ENCODE measurements at regions of chr3 and their contacts with region 1.

Region 1: DNA sequence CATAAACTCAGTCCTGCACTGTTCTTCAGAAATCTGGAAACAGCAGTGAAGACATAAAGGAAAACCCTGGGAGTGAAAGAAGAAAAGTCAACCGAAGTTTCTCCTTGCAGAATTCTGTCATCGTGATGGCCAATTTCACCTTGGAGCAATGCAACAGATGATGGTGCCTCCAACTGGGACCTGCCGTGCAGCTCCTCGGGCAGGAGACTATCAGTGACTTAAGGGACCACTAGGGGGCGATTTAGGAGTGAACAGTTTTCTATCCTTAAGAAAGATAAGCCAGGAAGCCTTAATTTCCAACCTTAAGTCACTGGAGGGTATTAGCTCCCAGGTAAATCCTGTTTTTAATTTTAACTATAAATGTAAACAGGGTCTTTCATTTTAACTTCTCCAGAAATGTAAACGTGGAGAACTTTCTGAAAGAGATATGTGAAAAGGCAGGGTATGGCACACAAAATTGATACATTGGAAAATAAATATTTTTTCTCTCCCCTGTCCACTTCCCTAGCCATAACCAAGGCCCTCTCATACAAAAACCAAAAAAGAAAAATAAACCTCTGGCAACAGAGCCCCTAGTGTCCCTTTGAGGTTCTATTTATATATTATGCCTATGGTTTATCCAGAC is 116.3 kb downstream of the PDZRN3 start:
- DNase-seq: no peak
- H3K4me3 Mint-ChIP-seq: no peak overlapping the region
- H3K27ac Mint-ChIP-seq: no peak overlapping the region
- H3K4me1 Mint-ChIP-seq: no peaks in the 10 kb centered on the region
- H3K27me3 Mint-ChIP-seq: no peaks in the 10 kb centered on the region

Region 2: DNA sequence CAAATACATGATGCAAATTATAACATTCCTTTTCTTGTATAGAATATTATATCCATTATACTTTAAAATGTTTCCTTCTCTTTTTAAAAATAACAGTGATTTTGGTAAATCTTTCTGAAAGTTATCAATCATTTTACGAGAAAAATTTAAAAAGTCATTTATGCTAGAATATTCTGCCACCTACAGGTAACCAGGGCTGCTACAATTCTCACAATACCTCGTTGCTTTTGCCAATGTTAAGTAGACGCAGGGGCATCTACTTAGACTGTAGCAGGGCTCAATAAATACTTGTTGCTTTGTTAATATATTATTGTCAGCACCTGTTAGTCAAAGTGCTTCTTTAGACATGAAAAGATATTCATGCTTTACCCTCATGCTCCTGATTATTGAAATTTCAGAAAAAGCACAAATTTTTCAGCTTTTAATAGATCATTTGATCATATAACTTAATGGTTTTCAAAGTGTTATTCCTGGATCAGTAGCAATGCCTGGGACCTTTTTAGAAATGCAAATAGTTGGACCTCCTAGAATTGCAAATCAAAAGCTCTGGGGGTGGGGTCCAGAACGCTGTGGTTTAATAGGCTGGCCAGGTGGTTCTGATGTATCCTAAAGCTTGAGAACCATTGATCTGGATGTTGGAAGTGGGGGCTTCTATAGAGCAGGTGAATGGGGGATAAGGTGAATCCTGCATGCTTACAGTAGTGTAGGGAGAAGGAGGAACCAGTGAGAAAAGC is 339.9 kb after region 1 on chr3:
- intact Hi-C with region 1: loop called (anchors 5 kb)
- DNase-seq: no peak
- H3K4me3 Mint-ChIP-seq: no peak overlapping the region
- H3K27ac Mint-ChIP-seq: no peak overlapping the region
- H3K4me1 Mint-ChIP-seq: no peaks in the 10 kb centered on the region
- H3K27me3 Mint-ChIP-seq: no peaks in the 10 kb centered on the region